OCI-LY7 (cell line): ENCODE measurements at regions of chr1 and their contacts with region 1.

Region 1: GRCh38 chr1:151485685-151486255 is 25.4 kb upstream of the CGN start:
- DNase-seq: no peak
- H3K4me3 ChIP-seq: no peak overlapping the region
- H3K27ac ChIP-seq: no peak overlapping the region
- H3K4me1 ChIP-seq: no peaks in the 10 kb centered on the region
- CTCF ChIP-seq: no peak

Region 2: GRCh38 chr1:151475175-151475574 is 10.6 kb before region 1 on chr1:
- CTCF ChIA-PET with region 1: no interaction called
- POLR2A ChIA-PET with region 1: interaction called, 15 read pairs
- intact Hi-C with region 1: no loop called
- DNase-seq: peak; percentile 38
- H3K4me3 ChIP-seq: no peak overlapping the region
- H3K27ac ChIP-seq: no peak overlapping the region
- H3K4me1 ChIP-seq: no peaks in the 10 kb centered on the region
- CTCF ChIP-seq: no peak

Region 3: DNA sequence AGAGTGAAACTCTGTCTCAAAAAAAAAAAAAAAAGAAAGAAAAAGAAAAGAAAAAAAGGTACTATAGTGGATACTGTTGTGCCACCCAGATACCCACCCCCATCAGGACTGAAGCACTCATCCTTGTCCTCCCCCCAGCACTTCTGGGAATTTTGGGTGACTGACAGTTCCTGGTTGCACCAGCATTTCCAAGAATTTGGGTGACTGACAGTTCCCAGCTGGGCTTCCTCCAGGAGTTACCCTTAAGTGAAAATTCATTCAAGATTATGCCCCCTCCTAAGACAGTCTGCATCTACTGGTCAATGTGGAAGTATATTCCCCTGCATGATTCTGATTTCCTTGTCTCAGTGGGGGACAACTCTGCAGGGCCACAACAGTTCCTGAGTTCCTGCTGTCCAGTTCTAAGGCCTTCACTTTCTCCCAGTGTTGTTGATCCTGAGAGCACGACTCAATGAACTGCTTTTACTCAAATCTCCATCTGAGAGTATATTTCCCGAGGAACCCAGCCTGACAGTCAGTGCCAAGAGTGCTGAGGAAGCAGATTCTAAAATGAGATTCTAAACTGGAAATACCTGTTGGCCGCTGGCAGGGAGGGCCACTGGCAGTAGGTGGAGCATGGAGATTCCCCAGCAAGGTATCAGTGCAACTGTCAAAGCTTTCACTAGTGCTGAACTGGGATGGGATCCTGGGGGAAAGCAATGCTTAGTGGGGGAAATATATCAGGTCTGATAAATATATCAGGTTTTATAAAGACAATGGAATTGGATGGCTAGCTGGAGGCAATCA is 254.0 kb after region 1 on chr1:
- CTCF ChIA-PET with region 1: no interaction called
- POLR2A ChIA-PET with region 1: no interaction called
- intact Hi-C with region 1: no loop called
- DNase-seq: no peak
- H3K4me3 ChIP-seq: no peak overlapping the region
- H3K27ac ChIP-seq: no peak overlapping the region
- H3K4me1 ChIP-seq: no peaks in the 10 kb centered on the region
- CTCF ChIP-seq: no peak